ENCODE measurements at regions of chr12 and their contacts with region 1.

Region 1: GRCh38 chr12:54005853-54006686 is 2.7 kb upstream of the HOXC8 start:
- DNase-seq: peak; percentile 87 to 91
- ATAC-seq: peak; percentile 87 to 92 (median 89)
- H3K4me3 ChIP-seq: peak overlapping the region; percentile 28
- H3K4me3 Mint-ChIP-seq: peak overlapping the region; percentile 95
- H3K27ac ChIP-seq: no peak overlapping the region
- H3K27ac Mint-ChIP-seq: peak overlapping the region; percentile 7 to 25
- H3K4me1 ChIP-seq: peaks cover 16% of the 10 kb centered on the region
- H3K4me1 Mint-ChIP-seq: peaks cover 12 to 23% of the 10 kb centered on the region in 2 donors
- H3K27me3 ChIP-seq: peaks cover 87% of the 10 kb centered on the region
- H3K27me3 Mint-ChIP-seq: peaks cover 81 to 91% of the 10 kb centered on the region in 2 donors
- CTCF ChIP-seq: peak; percentile 94

Region 2: DNA sequence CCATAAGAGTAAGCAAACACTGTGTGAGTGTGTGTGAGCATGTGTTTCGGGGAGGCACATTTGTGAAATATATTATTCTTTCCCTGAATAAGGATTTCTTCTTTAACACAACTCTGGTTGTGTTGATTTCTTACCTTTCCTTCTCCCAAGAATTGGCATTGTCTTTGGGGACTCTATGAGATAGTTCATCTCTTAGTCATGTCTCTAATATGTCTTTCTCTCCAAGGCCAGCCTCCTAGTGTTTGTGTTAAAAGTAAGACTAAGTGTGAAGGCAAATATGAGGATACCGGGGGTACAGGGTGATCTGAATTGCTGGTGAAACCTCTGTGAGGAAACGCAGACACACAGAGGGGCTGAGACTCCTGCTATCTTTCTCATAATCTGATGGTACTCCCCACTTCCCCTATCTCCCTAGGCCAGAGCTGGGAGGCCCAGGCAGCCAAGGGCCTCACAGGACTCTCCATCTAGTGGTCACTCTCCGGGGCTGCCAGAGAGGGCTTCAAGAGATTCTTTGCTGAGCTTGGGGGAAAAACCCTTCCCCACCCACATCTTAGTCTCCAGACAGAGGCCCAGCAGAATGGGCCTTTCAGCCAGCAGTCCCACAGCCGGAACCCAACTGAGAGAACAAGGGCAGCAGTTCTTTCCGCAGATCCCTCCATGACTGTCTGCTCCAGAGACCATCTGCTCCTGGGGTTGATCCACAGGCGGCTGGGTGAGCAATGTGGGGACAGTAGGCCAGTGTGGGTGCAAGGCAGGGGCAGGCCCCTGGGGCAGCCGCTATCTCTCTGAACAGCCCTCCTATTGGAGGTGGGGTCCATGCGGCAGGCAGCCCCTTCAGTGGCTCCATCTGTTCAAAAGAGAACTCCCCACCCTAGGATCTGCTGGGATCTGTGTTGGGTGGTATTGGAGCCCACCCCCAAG is 57.2 kb before region 1 on chr12:
- intact Hi-C with region 1: no loop called
- DNase-seq: no peak
- ATAC-seq: no peak
- H3K4me3 ChIP-seq: no peak overlapping the region
- H3K4me3 Mint-ChIP-seq: no peak overlapping the region
- H3K27ac ChIP-seq: no peak overlapping the region
- H3K27ac Mint-ChIP-seq: no peak overlapping the region
- H3K4me1 ChIP-seq: peaks cover 5% of the 10 kb centered on the region
- H3K4me1 Mint-ChIP-seq: peaks cover 0 to 5% of the 10 kb centered on the region in 2 donors
- H3K27me3 ChIP-seq: peaks cover 82% of the 10 kb centered on the region
- H3K27me3 Mint-ChIP-seq: peaks cover 77 to 80% of the 10 kb centered on the region in 2 donors
- CTCF ChIP-seq: no peak

Region 3: DNA sequence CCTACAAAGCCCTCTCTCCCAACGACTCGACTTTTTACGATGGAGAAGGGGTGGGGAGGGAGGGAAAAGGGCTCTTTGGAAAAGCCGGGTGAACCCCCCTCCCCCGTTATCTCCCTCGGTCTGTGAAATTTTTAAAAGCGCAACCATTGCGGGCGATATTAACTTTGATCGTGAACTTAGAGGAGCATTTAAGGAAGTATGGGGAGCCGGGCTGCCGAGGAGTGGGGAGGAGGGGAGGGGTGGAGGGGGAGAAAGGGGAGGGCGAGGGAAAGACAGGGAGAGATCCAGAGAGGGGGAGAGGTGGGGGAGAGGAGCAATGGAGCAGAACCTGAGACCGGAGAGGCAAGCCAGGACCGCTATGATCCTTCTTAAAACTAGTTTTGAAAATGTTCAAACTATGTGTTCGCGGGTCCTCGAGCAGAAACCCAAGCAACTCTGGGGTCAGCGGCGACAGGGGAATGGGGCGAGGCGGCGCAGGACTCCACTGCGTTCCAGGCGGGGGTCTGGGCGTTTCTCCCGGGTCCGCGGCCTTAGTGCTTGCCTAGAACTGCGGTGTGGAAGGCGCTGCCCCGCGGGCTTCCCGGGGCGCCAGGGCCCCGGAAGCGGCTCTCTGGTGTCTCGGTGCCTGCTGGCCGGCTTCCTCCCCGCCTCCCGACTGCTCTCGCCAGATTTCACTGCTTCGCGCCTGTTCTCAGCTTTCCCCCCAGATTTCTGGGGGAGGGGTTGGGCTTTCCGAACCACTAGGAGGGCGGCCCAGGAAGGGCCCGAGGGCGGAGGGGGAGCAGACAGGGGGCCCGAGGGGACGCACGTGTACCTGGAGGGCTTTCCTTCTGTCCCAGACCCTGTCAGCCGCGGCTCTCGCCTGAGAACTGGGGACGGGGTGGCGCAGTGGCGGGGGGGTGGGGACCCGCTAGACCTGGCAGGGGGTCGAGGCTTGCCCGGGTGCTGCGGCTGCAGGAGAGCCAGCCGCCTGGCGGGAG is 31.7 kb before region 1 on chr12 and contains the start of gene HOTAIR:
- intact Hi-C with region 1: loop called (anchors 5 kb)
- DNase-seq: peak in 1 of 2 donors; percentile 65
- ATAC-seq: peak; percentile 38 to 72 (median 70)
- H3K4me3 ChIP-seq: peak within 1 kb of the TSS; percentile 12
- H3K4me3 Mint-ChIP-seq: peak within 1 kb of the TSS; percentile 82
- H3K27ac ChIP-seq: no peak within 1 kb of the TSS
- H3K27ac Mint-ChIP-seq: no peak within 1 kb of the TSS
- H3K4me1 ChIP-seq: peaks cover 32% of the 10 kb centered on the region
- H3K4me1 Mint-ChIP-seq: peaks cover 18 to 31% of the 10 kb centered on the region in 2 donors
- H3K27me3 ChIP-seq: peaks cover 90% of the 10 kb centered on the region
- H3K27me3 Mint-ChIP-seq: peaks cover 81 to 83% of the 10 kb centered on the region in 2 donors
- CTCF ChIP-seq: no peak
- total RNA-seq, gene HOTAIR: not detected

Region 4: DNA sequence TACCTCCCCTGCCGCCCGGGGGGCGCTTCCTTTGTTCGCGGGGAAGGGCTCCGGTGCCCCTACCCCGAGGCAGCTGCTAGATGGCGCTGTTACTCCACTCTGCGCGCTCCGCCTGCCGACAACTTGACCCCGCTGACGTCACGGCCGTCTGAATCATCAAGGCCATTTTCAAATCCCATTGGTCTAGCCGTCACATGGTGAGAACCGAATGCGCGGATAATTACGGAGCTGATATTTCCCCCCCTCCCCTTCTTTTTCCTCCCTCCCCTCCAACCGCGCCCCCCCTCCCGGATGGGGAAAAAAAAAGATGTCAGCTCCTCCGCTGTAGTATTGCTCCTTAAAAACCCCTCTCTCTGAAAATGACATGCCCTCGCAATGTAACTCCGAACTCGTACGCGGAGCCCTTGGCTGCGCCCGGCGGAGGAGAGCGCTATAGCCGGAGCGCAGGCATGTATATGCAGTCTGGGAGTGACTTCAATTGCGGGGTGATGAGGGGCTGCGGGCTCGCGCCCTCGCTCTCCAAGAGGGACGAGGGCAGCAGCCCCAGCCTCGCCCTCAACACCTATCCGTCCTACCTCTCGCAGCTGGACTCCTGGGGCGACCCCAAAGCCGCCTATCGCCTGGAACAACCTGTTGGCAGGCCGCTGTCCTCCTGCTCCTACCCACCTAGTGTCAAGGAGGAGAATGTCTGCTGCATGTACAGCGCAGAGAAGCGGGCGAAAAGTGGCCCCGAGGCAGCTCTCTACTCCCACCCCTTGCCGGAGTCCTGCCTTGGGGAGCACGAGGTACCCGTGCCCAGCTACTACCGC is 21.0 kb before region 1 on chr12 and contains the start of gene HOXC10:
- intact Hi-C with region 1: loop called (anchors 2 kb)
- DNase-seq: peak; percentile 76 to 84
- ATAC-seq: peak; percentile 76 to 80 (median 78)
- H3K4me3 ChIP-seq: no peak within 1 kb of the TSS
- H3K4me3 Mint-ChIP-seq: peak within 1 kb of the TSS; percentile 67
- H3K27ac ChIP-seq: no peak within 1 kb of the TSS
- H3K27ac Mint-ChIP-seq: peak within 1 kb of the TSS; percentile 63 to 72
- H3K4me1 ChIP-seq: peaks cover 30% of the 10 kb centered on the region
- H3K4me1 Mint-ChIP-seq: peaks cover 24 to 43% of the 10 kb centered on the region in 2 donors
- H3K27me3 ChIP-seq: peaks cover 86% of the 10 kb centered on the region
- H3K27me3 Mint-ChIP-seq: peaks cover 88 to 89% of the 10 kb centered on the region in 2 donors
- CTCF ChIP-seq: peak; percentile 45
- total RNA-seq, gene HOXC10: not detected

Region 5: DNA sequence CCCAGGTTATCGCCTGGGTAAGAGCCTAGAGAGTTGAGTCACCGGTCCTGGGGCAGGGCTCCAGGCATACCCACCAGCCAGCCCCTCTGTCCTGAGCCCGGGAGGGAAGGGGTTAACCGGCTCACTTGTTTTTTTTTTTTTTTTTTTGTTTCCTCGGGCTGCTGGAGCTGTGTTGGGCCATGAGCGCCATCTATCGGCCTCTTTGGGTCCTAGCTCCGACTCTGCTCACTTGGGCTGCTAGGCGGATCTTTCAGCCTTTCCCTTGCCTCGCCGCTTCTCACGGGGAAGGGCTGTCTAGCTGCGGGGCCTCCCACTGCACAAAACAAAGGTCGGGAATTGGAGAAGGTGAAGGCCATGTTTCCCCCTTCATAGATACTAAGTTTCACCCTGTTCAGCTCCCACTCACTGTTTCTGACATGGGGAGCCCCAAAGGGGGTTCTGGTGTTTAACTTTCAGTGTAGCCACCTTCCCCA is 185.5 kb after region 1 on chr12:
- intact Hi-C with region 1: loop called (anchors 2 kb)
- DNase-seq: peak; percentile 68 to 95
- ATAC-seq: peak; percentile 67 to 80 (median 70)
- H3K4me3 ChIP-seq: no peak overlapping the region
- H3K4me3 Mint-ChIP-seq: no peak overlapping the region
- H3K27ac ChIP-seq: no peak overlapping the region
- H3K27ac Mint-ChIP-seq: no peak overlapping the region
- H3K4me1 ChIP-seq: peaks cover 29% of the 10 kb centered on the region
- H3K4me1 Mint-ChIP-seq: peaks cover 11 to 34% of the 10 kb centered on the region in 2 donors
- H3K27me3 ChIP-seq: peaks cover 30% of the 10 kb centered on the region
- H3K27me3 Mint-ChIP-seq: peaks cover 28 to 39% of the 10 kb centered on the region in 2 donors
- CTCF ChIP-seq: peak; percentile 75

Region 6: DNA sequence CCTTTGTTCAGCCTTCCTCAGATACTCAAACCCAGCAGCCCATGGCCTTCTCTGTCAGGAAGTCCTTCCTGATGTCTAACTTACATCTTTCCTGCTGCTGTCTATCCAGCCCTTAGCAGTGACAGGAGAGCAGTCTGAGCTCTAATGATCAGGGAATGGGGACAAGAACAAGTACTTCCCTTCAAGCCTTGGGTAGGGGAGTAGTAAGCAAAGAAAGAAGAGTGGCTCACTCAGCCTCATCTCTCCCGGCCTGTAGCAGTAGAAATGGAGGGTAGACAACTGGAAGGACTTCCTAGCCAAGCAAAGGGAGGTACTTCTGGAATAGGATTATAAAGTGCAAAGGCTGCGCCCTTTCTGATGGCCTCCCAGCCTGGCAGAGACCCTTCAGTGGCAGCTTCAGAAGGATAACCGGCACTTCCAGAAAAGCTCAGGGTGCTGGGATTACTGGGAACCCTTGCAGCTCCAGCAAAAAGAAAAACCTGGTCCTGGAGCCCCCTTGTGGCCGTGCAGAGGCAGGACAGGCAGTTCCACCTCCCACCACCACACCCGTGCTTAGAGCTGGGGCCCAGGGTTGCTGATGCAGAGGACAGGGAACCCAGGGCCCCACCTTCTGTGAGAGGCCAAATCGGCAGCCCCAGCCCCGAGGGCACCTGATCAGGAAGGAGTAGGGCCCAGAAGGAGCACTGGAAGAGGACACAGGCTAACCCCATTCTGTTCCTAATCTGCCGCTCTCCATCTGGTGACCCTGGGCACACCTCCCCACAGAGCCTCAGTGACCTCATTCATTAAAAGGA is 195.1 kb after region 1 on chr12:
- intact Hi-C with region 1: loop called (anchors 1 kb)
- DNase-seq: peak; percentile 60 to 83
- ATAC-seq: peak; percentile 85 to 98 (median 97)
- H3K4me3 ChIP-seq: no peak overlapping the region
- H3K4me3 Mint-ChIP-seq: no peak overlapping the region
- H3K27ac ChIP-seq: no peak overlapping the region
- H3K27ac Mint-ChIP-seq: no peak overlapping the region
- H3K4me1 ChIP-seq: peaks cover 2% of the 10 kb centered on the region
- H3K4me1 Mint-ChIP-seq: peaks cover 0 to 9% of the 10 kb centered on the region in 2 donors
- H3K27me3 ChIP-seq: peaks cover 19% of the 10 kb centered on the region
- H3K27me3 Mint-ChIP-seq: peaks cover 52 to 57% of the 10 kb centered on the region in 2 donors
- CTCF ChIP-seq: peak; percentile 95

Region 7: DNA sequence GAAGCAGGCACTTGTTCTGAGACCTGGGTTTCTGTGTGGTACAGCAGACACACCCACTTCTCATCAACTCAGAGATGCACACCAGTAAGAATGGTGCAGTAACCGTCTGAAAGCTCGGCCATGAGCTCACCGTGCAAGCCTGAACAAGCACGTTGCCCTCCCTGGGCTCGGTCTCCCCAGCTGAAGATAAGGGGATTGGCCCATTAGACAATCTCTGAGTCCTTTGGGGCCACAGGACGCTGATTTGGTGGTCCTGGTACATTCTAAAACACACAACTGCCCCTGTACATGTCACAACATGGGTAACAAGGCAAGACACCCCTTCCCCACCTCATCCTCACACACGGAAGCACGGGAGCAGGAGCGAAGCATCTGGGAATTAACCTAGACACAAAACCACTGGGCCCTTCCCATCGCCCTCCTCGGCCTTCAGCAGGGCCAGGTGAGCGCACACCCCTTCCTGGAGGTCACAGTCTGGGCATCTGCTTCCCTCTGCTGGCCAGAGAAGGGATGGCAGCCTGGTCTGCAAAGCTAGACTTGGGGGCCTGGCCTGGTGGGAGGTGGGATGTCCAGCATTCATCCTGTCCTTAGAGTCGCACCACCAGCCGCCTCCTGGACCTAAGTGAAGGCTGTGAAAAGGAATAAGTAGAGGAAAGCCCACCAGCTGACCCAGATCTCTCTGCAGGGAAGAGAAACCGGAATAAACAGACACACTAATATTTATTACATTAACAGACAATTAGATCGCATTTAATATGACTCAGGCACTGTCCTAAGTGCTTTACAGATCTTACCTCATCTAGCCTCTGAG is 201.6 kb after region 1 on chr12:
- intact Hi-C with region 1: loop called (anchors 1 kb)
- DNase-seq: peak; percentile 75 to 86
- ATAC-seq: peak; percentile 82 to 100 (median 97)
- H3K4me3 ChIP-seq: no peak overlapping the region
- H3K4me3 Mint-ChIP-seq: no peak overlapping the region
- H3K27ac ChIP-seq: no peak overlapping the region
- H3K27ac Mint-ChIP-seq: no peak overlapping the region
- H3K4me1 ChIP-seq: peaks cover 3% of the 10 kb centered on the region
- H3K4me1 Mint-ChIP-seq: peaks cover 5 to 10% of the 10 kb centered on the region in 2 donors
- H3K27me3 ChIP-seq: peaks cover 4% of the 10 kb centered on the region
- H3K27me3 Mint-ChIP-seq: peaks cover 31 to 36% of the 10 kb centered on the region in 2 donors
- CTCF ChIP-seq: peak; percentile 86